ENCODE measurements at regions of chr17 and their contacts with region 1.

Region 1: GRCh38 chr17:31754239-31754945 is 104.7 kb downstream of the COPRS start:
- DNase-seq: peak; percentile 48
- ATAC-seq: peak; percentile 34
- H3K4me3 ChIP-seq: no peak overlapping the region
- H3K27ac ChIP-seq: no peak overlapping the region
- H3K4me1 ChIP-seq: peaks cover 52% of the 10 kb centered on the region
- H3K27me3 ChIP-seq: no peaks in the 10 kb centered on the region
- CTCF ChIP-seq: no peak
- EP300 ChIP-seq: no peak
- POLR2A ChIP-seq: no peak
- RAD21 ChIP-seq: no peak

Region 2: GRCh38 chr17:31645351-31645750 is 109.0 kb before region 1 on chr17:
- CTCF ChIA-PET with region 1: no interaction called
- POLR2A ChIA-PET with region 1: no interaction called
- in situ Hi-C with region 1: no loop called
- intact Hi-C with region 1: no loop called
- DNase-seq: no peak
- ATAC-seq: no peak; the same call in 2 of the 3 replicates
- H3K4me3 ChIP-seq: no peak overlapping the region
- H3K27ac ChIP-seq: no peak overlapping the region
- H3K4me1 ChIP-seq: no peaks in the 10 kb centered on the region
- H3K27me3 ChIP-seq: no peaks in the 10 kb centered on the region; a peak in 1 of 5 replicates
- CTCF ChIP-seq: peak; percentile 60
- EP300 ChIP-seq: no peak
- POLR2A ChIP-seq: no peak
- RAD21 ChIP-seq: no peak

Region 3: GRCh38 chr17:31740611-31741082 is 13.7 kb before region 1 on chr17:
- CTCF ChIA-PET with region 1: no interaction called
- POLR2A ChIA-PET with region 1: no interaction called
- in situ Hi-C with region 1: no loop called
- intact Hi-C with region 1: no loop called
- DNase-seq: no peak
- ATAC-seq: no peak
- H3K4me3 ChIP-seq: no peak overlapping the region
- H3K27ac ChIP-seq: no peak overlapping the region
- H3K4me1 ChIP-seq: no peaks in the 10 kb centered on the region
- H3K27me3 ChIP-seq: peaks cover 1 to 3% of the 10 kb centered on the region in 2 experiments; a peak in 1 of 5 replicates
- CTCF ChIP-seq: no peak
- EP300 ChIP-seq: no peak
- POLR2A ChIP-seq: no peak
- RAD21 ChIP-seq: no peak

Region 4: GRCh38 chr17:31802502-31802901 is 48.1 kb after region 1 on chr17:
- CTCF ChIA-PET with region 1: no interaction called
- POLR2A ChIA-PET with region 1: no interaction called
- in situ Hi-C with region 1: no loop called
- intact Hi-C with region 1: loop called (anchors 10 kb)
- DNase-seq: no peak
- ATAC-seq: no peak
- H3K4me3 ChIP-seq: no peak overlapping the region
- H3K27ac ChIP-seq: peak overlapping the region; percentile 88
- H3K4me1 ChIP-seq: peaks cover 99% of the 10 kb centered on the region
- H3K27me3 ChIP-seq: no peaks in the 10 kb centered on the region
- CTCF ChIP-seq: no peak
- EP300 ChIP-seq: no peak
- POLR2A ChIP-seq: no peak
- RAD21 ChIP-seq: no peak

Region 5: DNA sequence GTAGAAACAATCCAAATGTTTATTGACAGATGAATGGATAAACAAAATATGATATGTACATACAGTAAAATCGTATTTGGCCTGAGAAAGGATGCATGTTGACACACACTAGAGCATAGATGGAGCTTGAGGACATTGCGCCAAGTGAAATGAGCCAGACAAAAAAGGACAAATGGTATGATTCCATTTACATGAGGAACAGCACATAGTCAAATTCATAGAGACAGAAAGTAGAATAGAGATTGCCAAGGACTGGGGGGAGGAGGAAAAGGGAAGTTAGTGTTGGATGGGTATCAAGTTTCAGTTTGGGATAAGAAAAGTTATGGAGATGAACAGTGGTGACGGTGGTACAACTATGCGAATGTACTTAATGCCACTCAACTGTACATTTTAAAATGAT is 56.7 kb after region 1 on chr17:
- CTCF ChIA-PET with region 1: no interaction called
- POLR2A ChIA-PET with region 1: no interaction called
- in situ Hi-C with region 1: loop called (anchors 10 kb)
- intact Hi-C with region 1: loop called (anchors 10 kb)
- DNase-seq: no peak
- ATAC-seq: no peak
- H3K4me3 ChIP-seq: no peak overlapping the region
- H3K27ac ChIP-seq: no peak overlapping the region
- H3K4me1 ChIP-seq: peaks cover 50% of the 10 kb centered on the region
- H3K27me3 ChIP-seq: no peaks in the 10 kb centered on the region
- CTCF ChIP-seq: no peak
- EP300 ChIP-seq: no peak
- POLR2A ChIP-seq: no peak
- RAD21 ChIP-seq: no peak